Endothelial cell of umbilical vein (primary cell): ENCODE measurements at regions of chr12 and their contacts with region 1.

Region 1: DNA sequence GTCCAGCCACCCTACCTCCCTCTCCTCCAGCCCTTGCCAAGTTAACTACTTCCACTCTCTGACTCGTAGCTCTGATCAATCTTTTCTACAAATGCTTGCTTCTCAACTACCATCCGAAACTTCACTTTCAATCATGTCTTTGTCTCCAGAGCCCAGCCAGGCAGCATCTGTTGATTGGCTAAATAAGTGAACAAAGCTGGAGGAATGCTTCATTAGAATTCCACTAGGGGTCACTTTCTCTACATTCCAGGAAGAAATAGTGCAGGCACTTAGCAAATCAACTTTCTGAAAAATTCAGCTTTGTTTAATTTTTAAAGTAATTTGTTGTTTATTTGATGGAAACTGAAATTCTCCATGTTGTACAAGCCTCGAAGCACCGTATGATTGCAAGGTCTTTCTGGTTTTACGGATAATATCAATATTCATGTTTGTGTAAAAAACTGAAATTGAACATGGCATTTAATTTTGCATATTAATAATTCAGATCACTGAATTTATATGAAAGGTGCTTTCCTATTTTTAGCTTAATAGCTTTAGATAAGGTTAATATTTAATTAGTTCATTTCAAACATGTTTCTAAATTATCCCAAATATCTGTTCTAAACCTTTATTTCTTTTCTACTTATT is 32.4 kb upstream of the HELB start:
- DNase-seq: peak; percentile 34
- H3K4me3 ChIP-seq: no peak overlapping the region
- H3K27ac ChIP-seq: no peak overlapping the region
- H3K4me1 ChIP-seq: no peaks in the 10 kb centered on the region
- H3K27me3 ChIP-seq: peaks cover 0 to 4% of the 10 kb centered on the region in 2 experiments
- CTCF ChIP-seq: peak; percentile 56 to 58
- POLR2A ChIP-seq: no peak

Region 2: DNA sequence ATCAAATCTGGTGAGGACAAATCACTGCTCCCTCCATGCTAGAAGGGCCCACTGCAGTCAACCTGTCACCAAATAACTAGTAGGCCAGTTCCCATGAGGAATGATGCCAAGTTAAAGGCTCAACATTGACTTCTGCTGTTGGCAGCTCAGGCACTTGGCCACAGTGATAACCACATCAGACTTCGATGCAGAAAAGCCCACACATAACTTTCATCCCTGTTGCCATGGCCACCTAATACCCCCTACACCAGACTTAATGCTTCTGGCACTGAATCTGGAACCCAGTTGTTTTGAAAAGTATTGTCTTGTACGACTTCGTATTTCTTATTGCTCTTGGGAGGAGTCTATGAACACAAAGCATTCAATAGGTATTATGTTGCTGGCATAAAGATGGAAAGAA is 11.9 kb before region 1 on chr12:
- CTCF ChIA-PET with region 1: interaction called, 11 read pairs
- POLR2A ChIA-PET with region 1: no interaction called
- dilution Hi-C with region 1: no loop called
- intact Hi-C with region 1: no loop called
- DNase-seq: no peak
- H3K4me3 ChIP-seq: no peak overlapping the region
- H3K27ac ChIP-seq: no peak overlapping the region
- H3K4me1 ChIP-seq: no peaks in the 10 kb centered on the region
- H3K27me3 ChIP-seq: peaks cover 3 to 6% of the 10 kb centered on the region in 2 experiments
- CTCF ChIP-seq: no peak
- POLR2A ChIP-seq: no peak

Region 3: DNA sequence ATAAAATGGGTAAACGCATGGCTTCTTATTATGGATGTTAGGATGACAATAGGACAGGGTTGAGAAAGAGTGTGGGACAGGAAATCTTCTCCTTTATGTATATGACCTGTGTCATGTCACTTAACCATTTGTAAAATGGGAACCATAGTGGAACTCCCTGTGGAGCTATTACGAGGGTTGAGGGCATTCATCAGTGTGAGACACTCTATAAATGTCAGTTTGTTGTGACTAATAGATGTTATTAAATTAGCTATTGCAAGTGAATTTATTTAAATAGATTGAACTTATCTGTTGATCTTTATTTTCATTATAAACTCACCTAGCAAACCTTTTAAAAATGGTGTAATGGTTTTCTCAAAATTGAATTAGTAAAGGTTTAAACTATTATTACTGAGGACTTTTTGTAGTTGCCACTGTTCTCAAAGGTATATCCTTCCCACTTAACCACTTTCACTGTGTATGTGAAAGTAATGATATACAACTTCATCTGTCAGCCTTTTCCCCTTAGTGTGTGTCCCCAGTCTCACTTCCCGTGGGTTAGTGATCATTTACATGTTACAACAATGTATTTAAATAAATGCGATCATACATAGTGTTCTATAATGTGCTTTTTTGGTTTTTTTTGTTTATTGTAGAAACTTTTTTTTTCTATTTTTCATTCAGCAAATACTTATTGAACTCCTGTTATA is 49.5 kb after region 1 on chr12:
- CTCF ChIA-PET with region 1: no interaction called
- POLR2A ChIA-PET with region 1: no interaction called
- dilution Hi-C with region 1: no loop called
- intact Hi-C with region 1: no loop called
- DNase-seq: no peak
- H3K4me3 ChIP-seq: no peak overlapping the region
- H3K27ac ChIP-seq: no peak overlapping the region
- H3K4me1 ChIP-seq: peaks cover 6% of the 10 kb centered on the region
- H3K27me3 ChIP-seq: no peaks in the 10 kb centered on the region
- CTCF ChIP-seq: no peak
- POLR2A ChIP-seq: no peak

Region 4: DNA sequence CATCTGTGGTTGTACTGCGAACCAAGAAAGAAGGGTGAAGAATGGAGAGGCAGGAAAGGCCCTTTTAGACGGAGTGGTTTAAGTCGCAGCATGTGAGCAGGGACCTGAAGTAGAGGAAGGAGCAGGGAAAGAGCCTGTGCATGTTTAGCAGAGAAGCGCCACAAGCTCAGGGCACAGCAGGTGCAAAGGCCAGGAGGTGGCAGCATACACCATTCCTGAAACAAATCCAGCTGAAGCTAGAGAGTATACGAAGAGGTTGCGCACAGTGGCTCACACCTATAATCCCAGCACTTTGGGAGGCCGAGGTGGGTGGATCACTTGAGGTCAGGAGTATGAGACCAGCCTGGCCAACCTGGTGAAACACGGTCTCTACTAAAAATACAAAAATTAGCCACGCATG is 82.3 kb after region 1 on chr12:
- CTCF ChIA-PET with region 1: no interaction called
- POLR2A ChIA-PET with region 1: no interaction called
- dilution Hi-C with region 1: no loop called
- intact Hi-C with region 1: no loop called
- DNase-seq: peak; percentile 27
- H3K4me3 ChIP-seq: no peak overlapping the region
- H3K27ac ChIP-seq: no peak overlapping the region
- H3K4me1 ChIP-seq: no peaks in the 10 kb centered on the region
- H3K27me3 ChIP-seq: no peaks in the 10 kb centered on the region
- CTCF ChIP-seq: peak; percentile 19 to 35
- POLR2A ChIP-seq: no peak

Region 5: GRCh38 chr12:66555113-66555746 is 285.4 kb after region 1 on chr12:
- CTCF ChIA-PET with region 1: no interaction called
- POLR2A ChIA-PET with region 1: no interaction called
- dilution Hi-C with region 1: no loop called
- intact Hi-C with region 1: loop called (anchors 10 kb)
- DNase-seq: no peak
- H3K4me3 ChIP-seq: no peak overlapping the region
- H3K27ac ChIP-seq: no peak overlapping the region
- H3K4me1 ChIP-seq: no peaks in the 10 kb centered on the region
- H3K27me3 ChIP-seq: peaks cover 0 to 3% of the 10 kb centered on the region in 2 experiments
- CTCF ChIP-seq: no peak
- POLR2A ChIP-seq: no peak

Region 6: GRCh38 chr12:66942741-66943465 is 673.0 kb after region 1 on chr12:
- CTCF ChIA-PET with region 1: no interaction called
- POLR2A ChIA-PET with region 1: no interaction called
- dilution Hi-C with region 1: no loop called
- intact Hi-C with region 1: no loop called
- DNase-seq: no peak
- H3K4me3 ChIP-seq: no peak overlapping the region
- H3K27ac ChIP-seq: no peak overlapping the region
- H3K4me1 ChIP-seq: no peaks in the 10 kb centered on the region
- H3K27me3 ChIP-seq: no peaks in the 10 kb centered on the region
- CTCF ChIP-seq: no peak
- POLR2A ChIP-seq: no peak